ENCODE measurements at regions of chr6 and their contacts with region 1.

Region 1: GRCh38 chr6:16770701-16771569 is 9.7 kb upstream of the ATXN1 start:
- DNase-seq: peak; percentile 76
- H3K4me3 ChIP-seq: no peak overlapping the region
- H3K27ac ChIP-seq: peak overlapping the region; percentile 84
- H3K4me1 ChIP-seq: peaks cover 39% of the 10 kb centered on the region
- H3K27me3 ChIP-seq: no peaks in the 10 kb centered on the region
- CTCF ChIP-seq: peak; percentile 93 to 94
- POLR2A ChIP-seq: no peak

Region 2: GRCh38 chr6:16355699-16356446 is 415.1 kb before region 1 on chr6:
- CTCF ChIA-PET with region 1: no interaction called
- POLR2A ChIA-PET with region 1: no interaction called
- dilution Hi-C with region 1: no loop called
- intact Hi-C with region 1: no loop called
- DNase-seq: peak; percentile 40
- H3K4me3 ChIP-seq: no peak overlapping the region
- H3K27ac ChIP-seq: no peak overlapping the region
- H3K4me1 ChIP-seq: peaks cover 24% of the 10 kb centered on the region
- H3K27me3 ChIP-seq: no peaks in the 10 kb centered on the region
- CTCF ChIP-seq: no peak
- POLR2A ChIP-seq: no peak

Region 3: DNA sequence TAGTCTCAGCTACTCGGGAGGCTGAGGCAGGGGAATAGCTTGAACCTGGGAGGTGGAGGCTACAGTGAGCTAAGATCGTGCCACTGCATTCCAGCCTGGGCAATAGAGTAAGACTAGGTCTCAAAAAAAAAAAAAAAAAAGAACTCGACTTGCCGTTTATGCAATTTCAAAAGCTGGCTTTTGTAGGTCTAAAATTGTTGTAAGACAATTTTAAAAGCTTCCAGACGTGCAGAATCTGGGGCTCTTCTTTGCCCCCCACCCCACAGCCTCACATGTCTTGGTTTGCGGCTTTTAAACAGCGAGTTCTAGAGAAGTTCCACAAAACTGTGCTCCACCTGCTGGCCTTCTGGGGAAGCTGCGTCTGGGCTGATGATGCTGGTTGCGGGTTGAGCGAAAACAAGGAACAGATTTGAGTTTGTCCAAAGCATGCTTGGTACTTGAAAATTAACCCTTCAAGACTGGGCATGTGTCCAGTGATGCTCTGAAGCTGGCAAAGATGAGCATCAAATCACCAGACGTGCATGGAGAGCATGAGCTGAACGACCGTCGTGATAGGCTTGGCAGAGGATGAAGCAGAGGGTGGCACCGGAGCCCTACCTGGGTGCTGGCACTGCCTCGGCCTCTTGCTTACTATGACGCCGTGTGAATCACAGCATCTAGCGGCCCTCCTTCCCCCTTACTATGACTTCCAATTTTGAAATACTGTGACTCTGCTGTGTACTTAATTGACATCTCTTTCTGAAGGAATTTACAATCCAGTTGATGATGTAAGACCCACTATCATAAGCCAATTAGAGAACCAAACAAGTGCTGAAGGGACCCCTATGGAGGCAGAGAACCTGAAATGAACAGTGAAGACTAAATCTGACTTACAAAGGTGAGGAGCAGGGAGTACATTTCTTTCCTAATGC is 361.1 kb before region 1 on chr6:
- CTCF ChIA-PET with region 1: no interaction called
- POLR2A ChIA-PET with region 1: no interaction called
- dilution Hi-C with region 1: no loop called
- intact Hi-C with region 1: loop called (anchors 2 kb)
- DNase-seq: peak; percentile 67
- H3K4me3 ChIP-seq: no peak overlapping the region
- H3K27ac ChIP-seq: no peak overlapping the region
- H3K4me1 ChIP-seq: no peaks in the 10 kb centered on the region
- H3K27me3 ChIP-seq: no peaks in the 10 kb centered on the region
- CTCF ChIP-seq: peak; percentile 87 to 89
- POLR2A ChIP-seq: no peak

Region 4: GRCh38 chr6:16635810-16636602 is 134.9 kb before region 1 on chr6:
- CTCF ChIA-PET with region 1: no interaction called
- POLR2A ChIA-PET with region 1: no interaction called
- dilution Hi-C with region 1: no loop called
- intact Hi-C with region 1: no loop called
- DNase-seq: no peak
- H3K4me3 ChIP-seq: no peak overlapping the region
- H3K27ac ChIP-seq: no peak overlapping the region
- H3K4me1 ChIP-seq: peaks cover 9% of the 10 kb centered on the region
- H3K27me3 ChIP-seq: no peaks in the 10 kb centered on the region
- CTCF ChIP-seq: no peak
- POLR2A ChIP-seq: no peak

Region 5: GRCh38 chr6:16781348-16782169 is 10.6 kb after region 1 on chr6:
- CTCF ChIA-PET with region 1: interaction called, 23 read pairs
- POLR2A ChIA-PET with region 1: no interaction called
- dilution Hi-C with region 1: no loop called
- intact Hi-C with region 1: no loop called
- DNase-seq: no peak
- H3K4me3 ChIP-seq: no peak overlapping the region
- H3K27ac ChIP-seq: no peak overlapping the region
- H3K4me1 ChIP-seq: no peaks in the 10 kb centered on the region
- H3K27me3 ChIP-seq: peaks cover 0 to 1% of the 10 kb centered on the region in 2 experiments
- CTCF ChIP-seq: no peak
- POLR2A ChIP-seq: no peak

Region 6: DNA sequence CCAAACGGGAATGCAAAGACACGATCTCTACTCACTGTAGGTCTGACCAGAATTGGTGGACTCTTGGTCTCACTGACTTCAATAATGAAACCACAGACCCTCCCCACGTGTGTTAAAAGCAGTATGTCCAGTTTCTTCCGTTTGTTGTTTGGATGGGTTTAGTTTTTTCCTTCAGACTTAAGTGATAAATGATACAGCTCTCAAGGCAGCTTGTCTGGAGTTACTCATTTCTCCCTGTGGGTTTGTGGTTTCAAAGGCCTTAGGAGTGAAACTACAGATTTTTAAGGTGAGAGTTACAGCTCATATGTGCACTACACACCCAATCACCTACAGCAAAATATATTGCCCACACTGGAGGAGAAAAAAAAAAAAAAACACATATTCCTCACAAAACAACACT is 244.2 kb after region 1 on chr6:
- CTCF ChIA-PET with region 1: no interaction called
- POLR2A ChIA-PET with region 1: no interaction called
- dilution Hi-C with region 1: no loop called
- intact Hi-C with region 1: loop called (anchors 5 kb)
- DNase-seq: no peak
- H3K4me3 ChIP-seq: no peak overlapping the region
- H3K27ac ChIP-seq: no peak overlapping the region
- H3K4me1 ChIP-seq: peaks cover 22% of the 10 kb centered on the region
- H3K27me3 ChIP-seq: no peaks in the 10 kb centered on the region
- CTCF ChIP-seq: no peak
- POLR2A ChIP-seq: no peak

Region 7: DNA sequence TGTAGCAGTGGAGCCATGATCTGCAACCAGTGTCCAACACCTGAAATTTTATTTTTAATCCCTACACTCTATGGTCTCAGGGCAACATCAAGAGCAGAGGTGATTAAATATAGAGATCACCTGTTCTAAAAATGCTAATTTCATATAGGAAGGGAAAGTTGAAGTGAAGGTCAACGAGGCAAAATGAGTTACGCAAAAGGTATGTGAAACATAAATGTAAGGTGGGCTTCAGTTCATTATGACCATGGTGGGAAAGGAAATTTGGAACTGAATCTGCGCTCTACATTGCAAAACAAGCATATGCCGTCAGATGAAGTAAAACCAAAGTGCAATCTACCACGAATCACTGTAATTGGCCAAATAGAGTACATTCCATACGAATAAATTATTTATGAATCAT is 295.7 kb after region 1 on chr6:
- CTCF ChIA-PET with region 1: no interaction called
- POLR2A ChIA-PET with region 1: no interaction called
- dilution Hi-C with region 1: no loop called
- intact Hi-C with region 1: no loop called
- DNase-seq: no peak
- H3K4me3 ChIP-seq: no peak overlapping the region
- H3K27ac ChIP-seq: no peak overlapping the region
- H3K4me1 ChIP-seq: peaks cover 16% of the 10 kb centered on the region
- H3K27me3 ChIP-seq: no peaks in the 10 kb centered on the region
- CTCF ChIP-seq: no peak
- POLR2A ChIP-seq: no peak

Region 8: GRCh38 chr6:17086469-17086868 is 315.5 kb after region 1 on chr6:
- CTCF ChIA-PET with region 1: interaction called, 112 read pairs
- POLR2A ChIA-PET with region 1: no interaction called
- dilution Hi-C with region 1: no loop called
- intact Hi-C with region 1: loop called (anchors 1 kb)
- DNase-seq: peak; percentile 76
- H3K4me3 ChIP-seq: no peak overlapping the region
- H3K27ac ChIP-seq: no peak overlapping the region
- H3K4me1 ChIP-seq: no peaks in the 10 kb centered on the region
- H3K27me3 ChIP-seq: peaks cover 7 to 17% of the 10 kb centered on the region in 2 experiments
- CTCF ChIP-seq: peak; percentile 60 to 61
- POLR2A ChIP-seq: no peak

Measured in endothelial cell of umbilical vein (primary cell).